ENCODE measurements at regions of chr18 and their contacts with region 1.

Region 1: DNA sequence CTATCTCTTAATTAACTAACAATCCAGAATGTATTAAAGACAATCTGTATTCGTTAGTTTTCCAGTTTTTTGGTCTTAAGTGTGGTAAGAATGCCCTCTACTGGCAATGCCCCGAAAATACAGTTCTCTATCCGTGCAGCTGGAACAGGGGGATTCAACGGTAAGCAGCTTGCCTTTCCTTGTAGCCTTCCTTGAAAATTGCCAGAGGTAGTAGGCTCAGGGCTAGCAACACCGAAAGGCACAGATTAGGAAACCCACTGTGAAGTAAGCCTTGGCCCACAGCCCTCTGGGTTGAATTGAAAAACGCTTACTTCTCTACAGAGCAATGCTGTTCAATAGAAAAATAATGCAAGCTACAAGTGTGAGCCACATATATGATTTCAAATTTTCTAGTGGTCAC is 17.1 kb upstream of the VPS4B start:
- DNase-seq: no peak
- ATAC-seq: peak; percentile 79

Region 2: GRCh38 chr18:63016270-63016669 is 423.1 kb before region 1 on chr18:
- intact Hi-C with region 1: loop called (anchors 5 kb)
- DNase-seq: no peak
- ATAC-seq: peak; percentile 78

Region 3: DNA sequence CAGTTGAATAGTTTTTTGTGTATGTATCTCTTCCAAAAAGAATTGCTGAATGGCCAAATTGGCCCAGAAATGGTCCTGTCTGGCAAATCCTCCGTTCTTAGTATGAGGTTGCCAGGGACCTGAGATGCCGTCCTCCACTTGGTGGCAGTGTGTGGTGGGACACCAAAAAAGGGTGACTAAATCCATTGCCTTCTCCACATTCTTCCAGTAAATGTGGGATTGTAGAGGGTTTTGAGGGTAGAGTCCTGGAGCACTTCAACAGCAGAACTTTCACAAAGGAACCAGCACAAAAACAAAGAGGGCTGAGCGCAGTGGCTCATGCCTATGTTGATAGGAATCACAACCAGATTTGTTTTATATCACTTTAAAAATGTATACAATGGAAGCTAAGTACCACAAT is 319.7 kb before region 1 on chr18:
- intact Hi-C with region 1: loop called (anchors 10 kb)
- DNase-seq: no peak
- ATAC-seq: peak; percentile 73

Region 4: DNA sequence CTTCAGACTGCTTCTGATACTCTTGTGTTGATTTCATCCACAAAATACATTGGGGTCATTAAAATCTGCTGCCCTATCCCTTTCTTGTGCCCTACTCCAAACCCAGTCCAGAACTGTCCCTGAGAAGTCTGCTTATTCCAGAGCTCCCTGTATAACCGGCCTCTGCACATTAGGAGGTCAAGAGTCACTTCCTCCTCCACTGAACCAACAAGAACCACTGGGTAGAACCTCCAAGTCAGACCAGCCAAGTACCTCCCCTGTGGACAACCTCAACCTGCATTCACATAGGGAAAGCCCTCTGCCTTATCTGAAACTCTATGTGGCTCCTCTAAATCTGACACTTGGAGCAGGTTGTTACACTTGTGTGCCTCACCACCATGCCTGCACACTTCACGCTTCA is 94.4 kb before region 1 on chr18:
- intact Hi-C with region 1: loop called (anchors 2 kb)
- DNase-seq: no peak
- ATAC-seq: peak; percentile 9

Region 5: DNA sequence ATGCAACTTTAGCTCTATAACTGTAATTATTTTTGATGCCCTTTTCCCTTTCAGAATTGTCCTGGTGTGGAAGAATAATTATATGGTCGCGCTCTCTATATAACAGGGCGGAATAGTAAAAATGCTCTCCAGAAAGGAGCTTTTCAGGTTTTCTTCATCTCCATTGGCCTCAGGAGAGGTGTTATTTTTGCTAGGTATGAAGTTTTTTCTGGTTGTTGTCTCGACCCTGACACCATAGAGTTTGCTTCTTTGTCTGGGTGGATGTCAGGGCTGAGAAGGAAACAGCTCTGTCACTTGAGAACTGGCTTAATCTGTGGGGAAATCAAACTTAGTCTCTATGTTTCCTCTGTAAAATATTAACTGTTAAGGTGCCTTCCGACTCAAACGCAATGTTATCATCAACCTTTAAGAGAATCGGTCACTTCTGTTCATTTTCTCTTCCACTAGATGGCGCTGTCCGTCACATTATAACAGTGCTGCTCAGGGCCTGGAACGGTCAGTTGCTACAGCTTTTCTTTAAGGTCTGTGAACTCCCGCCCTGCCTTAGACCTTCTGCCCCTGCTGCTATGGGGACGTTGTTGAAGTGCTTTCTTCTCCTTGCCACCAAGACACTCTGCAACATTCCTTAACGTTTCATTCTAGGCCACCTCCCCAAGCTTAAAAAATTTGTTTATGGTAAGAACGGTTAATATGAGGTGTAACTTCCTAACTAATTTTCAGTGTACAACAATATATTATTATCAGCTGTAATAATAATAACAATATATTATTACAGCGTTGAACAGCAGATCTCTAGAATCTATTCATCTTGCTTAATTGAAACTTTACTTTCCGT is 79.1 kb after region 1 on chr18:
- intact Hi-C with region 1: no loop called
- DNase-seq: no peak
- ATAC-seq: peak; percentile 89

Measured in Right ventricle myocardium superior (tissue), 1 donor.